ENCODE measurements at regions of chr4 and their contacts with region 1.

Region 1: GRCh38 chr4:171186700-171187099 is 626.5 kb upstream of the GALNTL6 start:
- DNase-seq: no peak
- H3K4me3 ChIP-seq: no peak overlapping the region
- CTCF ChIP-seq: no peak
- POLR2A ChIP-seq: no peak

Region 2: DNA sequence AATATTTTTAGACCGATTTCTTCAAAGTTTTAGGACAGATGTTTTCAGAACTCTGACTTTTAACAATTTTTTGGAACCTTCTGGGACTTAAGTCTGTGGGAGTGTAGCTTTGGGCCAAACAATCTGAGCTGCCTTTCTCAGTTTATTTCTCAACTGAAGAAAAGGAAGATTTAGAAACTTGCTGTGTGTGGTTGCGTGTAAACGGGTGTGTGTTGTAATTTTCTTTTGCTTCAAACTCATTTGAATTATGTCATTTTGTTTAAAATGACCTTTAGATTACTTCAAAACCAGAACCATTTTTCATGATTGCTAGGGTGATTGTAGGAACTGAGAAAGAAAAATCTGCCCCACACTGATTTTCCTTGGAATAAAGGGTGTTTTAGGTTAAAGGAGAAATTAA is 48.8 kb after region 1 on chr4:
- intact Hi-C with region 1: loop called (anchors 1 kb)
- DNase-seq: no peak
- H3K4me3 ChIP-seq: no peak overlapping the region
- CTCF ChIP-seq: no peak
- POLR2A ChIP-seq: no peak